Activated CD8-positive, alpha-beta T cell treated with anti-CD3 and anti-CD28 coated beads, Interleukin-2, amount 10 ng/mL, durations not matched to agents 7 days and 5 days (primary cell): ENCODE measurements at regions of chr5 and their contacts with region 1.

Region 1: GRCh38 chr5:157271740-157272271 is 5.9 kb downstream of the CYFIP2 start:
- DNase-seq: peak; percentile 97
- ATAC-seq: peak; percentile 87
- H3K4me3 Mint-ChIP-seq: peak overlapping the region; percentile 79
- H3K27ac Mint-ChIP-seq: peak overlapping the region; percentile 95
- H3K4me1 Mint-ChIP-seq: peaks cover 78% of the 10 kb centered on the region
- H3K27me3 Mint-ChIP-seq: no peaks in the 10 kb centered on the region

Region 2: DNA sequence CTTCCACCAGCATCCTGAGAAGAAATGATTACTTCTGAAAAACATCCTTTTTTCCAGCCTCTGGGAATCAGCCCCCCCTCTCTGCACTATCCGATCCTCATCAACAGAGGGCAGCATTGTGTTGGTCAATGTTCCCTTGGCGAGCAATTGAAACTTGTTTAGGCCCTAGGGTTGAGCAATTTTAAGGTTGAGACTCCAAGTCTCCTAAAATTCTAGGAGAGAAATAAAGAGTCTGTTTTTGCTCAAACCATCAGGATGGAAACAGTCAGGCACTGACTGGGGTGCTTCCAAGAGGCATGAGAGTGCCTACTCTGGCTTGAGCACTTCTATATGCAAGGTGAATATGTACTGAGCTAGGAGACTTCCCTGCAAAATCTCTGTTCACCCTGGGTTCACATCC is 18.3 kb before region 1 on chr5:
- CTCF ChIA-PET with region 1: interaction called, 59 read pairs
- POLR2A ChIA-PET with region 1: interaction called, 50 read pairs
- DNase-seq: no peak
- ATAC-seq: no peak
- H3K4me3 Mint-ChIP-seq: peak overlapping the region; percentile 54
- H3K27ac Mint-ChIP-seq: peak overlapping the region; percentile 94
- H3K4me1 Mint-ChIP-seq: peaks cover 95% of the 10 kb centered on the region
- H3K27me3 Mint-ChIP-seq: no peaks in the 10 kb centered on the region

Region 3: GRCh38 chr5:157283434-157283833 is 11.6 kb after region 1 on chr5:
- CTCF ChIA-PET with region 1: interaction called, 15 read pairs
- POLR2A ChIA-PET with region 1: interaction called, 31 read pairs
- DNase-seq: peak; percentile 68
- ATAC-seq: peak; percentile 96
- H3K4me3 Mint-ChIP-seq: peak overlapping the region; percentile 1
- H3K27ac Mint-ChIP-seq: peak overlapping the region; percentile 62
- H3K4me1 Mint-ChIP-seq: peaks cover 84% of the 10 kb centered on the region
- H3K27me3 Mint-ChIP-seq: no peaks in the 10 kb centered on the region

Region 4: GRCh38 chr5:157290146-157290980 is 18.6 kb after region 1 on chr5:
- CTCF ChIA-PET with region 1: interaction called, 15 read pairs
- POLR2A ChIA-PET with region 1: interaction called, 31 read pairs
- DNase-seq: no peak
- ATAC-seq: no peak
- H3K4me3 Mint-ChIP-seq: no peak overlapping the region
- H3K27ac Mint-ChIP-seq: peak overlapping the region; percentile 59
- H3K4me1 Mint-ChIP-seq: peaks cover 70% of the 10 kb centered on the region
- H3K27me3 Mint-ChIP-seq: no peaks in the 10 kb centered on the region

Region 5: DNA sequence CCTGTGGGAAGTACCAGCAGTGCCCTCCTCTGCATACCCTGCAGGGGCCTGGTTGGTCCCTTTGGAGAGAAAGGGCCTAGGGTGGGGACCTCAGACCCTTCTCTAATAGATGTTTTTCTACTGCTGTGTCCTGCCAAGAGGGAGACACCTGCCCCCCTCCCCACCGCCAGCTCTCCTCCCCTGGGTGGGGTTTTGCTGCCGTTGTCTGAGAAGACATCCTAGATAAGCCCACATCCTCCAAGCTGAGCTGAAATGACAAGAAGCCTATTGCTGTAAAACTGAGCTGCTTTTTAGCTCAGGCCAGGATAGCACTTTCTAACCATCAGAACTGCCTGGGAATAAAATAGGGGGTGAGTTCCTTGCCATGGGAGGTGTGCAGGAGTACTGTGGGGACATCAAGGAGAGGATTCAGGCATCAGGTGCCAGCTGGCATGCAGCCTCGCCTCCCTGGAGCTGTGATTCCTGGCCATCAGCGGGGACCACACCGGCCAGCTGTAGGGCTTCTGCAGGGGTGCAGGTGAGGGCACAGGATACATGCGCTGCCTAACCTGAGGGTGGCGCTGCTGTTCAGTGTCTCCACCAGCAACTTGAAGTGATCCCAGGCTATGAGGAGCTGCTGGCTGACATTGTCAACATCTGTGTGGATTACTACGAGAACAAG is 32.0 kb after region 1 on chr5:
- CTCF ChIA-PET with region 1: interaction called, 15 read pairs
- POLR2A ChIA-PET with region 1: interaction called, 13 read pairs
- DNase-seq: peak; percentile 71
- ATAC-seq: peak; percentile 46
- H3K4me3 Mint-ChIP-seq: peak overlapping the region; percentile 34
- H3K27ac Mint-ChIP-seq: peak overlapping the region; percentile 88
- H3K4me1 Mint-ChIP-seq: peaks cover 61% of the 10 kb centered on the region
- H3K27me3 Mint-ChIP-seq: no peaks in the 10 kb centered on the region

Region 6: GRCh38 chr5:157312492-157312891 is 40.7 kb after region 1 on chr5:
- CTCF ChIA-PET with region 1: interaction called, 15 read pairs
- POLR2A ChIA-PET with region 1: interaction called, 13 read pairs
- DNase-seq: peak; percentile 74
- ATAC-seq: peak; percentile 92
- H3K4me3 Mint-ChIP-seq: no peak overlapping the region
- H3K27ac Mint-ChIP-seq: peak overlapping the region; percentile 63
- H3K4me1 Mint-ChIP-seq: peaks cover 32% of the 10 kb centered on the region
- H3K27me3 Mint-ChIP-seq: no peaks in the 10 kb centered on the region